ENCODE measurements at regions of chr7 and their contacts with region 1.

Region 1: DNA sequence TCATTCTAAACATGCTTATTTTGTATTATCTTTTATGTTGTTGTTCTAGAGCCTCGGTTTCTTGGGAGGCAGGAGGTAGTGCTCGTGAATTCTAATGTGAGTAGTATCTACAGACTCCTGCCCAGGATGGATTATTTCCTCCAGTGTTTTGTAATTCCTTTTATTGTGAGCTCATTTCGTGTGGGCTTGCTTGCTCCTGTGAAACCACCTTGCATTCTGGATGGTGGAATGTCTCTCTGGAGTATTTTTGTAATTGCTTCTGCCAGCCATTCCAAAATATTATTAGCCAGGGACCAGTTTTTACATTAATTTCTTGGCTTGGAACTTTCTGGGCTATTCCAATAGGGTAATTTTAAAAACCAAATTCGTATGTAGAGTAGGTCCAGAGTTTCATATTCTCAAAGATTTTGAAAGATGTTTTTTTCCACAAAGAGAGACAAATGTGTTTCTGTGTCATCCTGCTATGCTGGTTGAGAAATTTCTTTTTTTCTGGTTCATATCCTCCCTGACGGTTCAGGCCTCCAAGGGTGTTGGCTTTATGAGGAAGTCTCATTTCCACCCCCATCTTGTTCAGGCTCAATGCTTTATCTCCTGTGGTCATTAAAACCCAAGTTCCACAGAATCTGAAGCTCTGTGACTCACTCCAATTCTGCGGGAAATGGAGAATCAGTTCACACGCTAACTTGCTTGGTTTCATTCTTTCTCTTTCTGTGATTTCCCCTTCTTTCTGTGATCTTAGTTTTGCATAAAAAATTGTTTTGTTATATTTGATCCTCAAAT is 41.7 kb upstream of the CALD1 start:
- DNase-seq: peak; percentile 76
- H3K4me3 Mint-ChIP-seq: peak overlapping the region; percentile 26
- H3K27ac Mint-ChIP-seq: peak overlapping the region; percentile 83
- H3K4me1 Mint-ChIP-seq: peaks cover 28% of the 10 kb centered on the region
- H3K27me3 Mint-ChIP-seq: no peaks in the 10 kb centered on the region

Region 2: GRCh38 chr7:134613623-134614347 is 124.0 kb before region 1 on chr7:
- intact Hi-C with region 1: loop called (anchors 1 kb)
- DNase-seq: peak; percentile 64
- H3K4me3 Mint-ChIP-seq: no peak overlapping the region
- H3K27ac Mint-ChIP-seq: peak overlapping the region; percentile 85
- H3K4me1 Mint-ChIP-seq: peaks cover 12% of the 10 kb centered on the region
- H3K27me3 Mint-ChIP-seq: peaks cover 26% of the 10 kb centered on the region

Region 3: GRCh38 chr7:134710859-134711624 is 26.7 kb before region 1 on chr7:
- intact Hi-C with region 1: loop called (anchors 1 kb)
- DNase-seq: peak; percentile 85
- H3K4me3 Mint-ChIP-seq: peak overlapping the region; percentile 74
- H3K27ac Mint-ChIP-seq: peak overlapping the region; percentile 93
- H3K4me1 Mint-ChIP-seq: peaks cover 20% of the 10 kb centered on the region
- H3K27me3 Mint-ChIP-seq: peaks cover 2% of the 10 kb centered on the region

Region 4: GRCh38 chr7:134722786-134723322 is 14.9 kb before region 1 on chr7:
- intact Hi-C with region 1: no loop called
- DNase-seq: no peak
- H3K4me3 Mint-ChIP-seq: no peak overlapping the region
- H3K27ac Mint-ChIP-seq: no peak overlapping the region
- H3K4me1 Mint-ChIP-seq: peaks cover 2% of the 10 kb centered on the region
- H3K27me3 Mint-ChIP-seq: no peaks in the 10 kb centered on the region

Region 5: DNA sequence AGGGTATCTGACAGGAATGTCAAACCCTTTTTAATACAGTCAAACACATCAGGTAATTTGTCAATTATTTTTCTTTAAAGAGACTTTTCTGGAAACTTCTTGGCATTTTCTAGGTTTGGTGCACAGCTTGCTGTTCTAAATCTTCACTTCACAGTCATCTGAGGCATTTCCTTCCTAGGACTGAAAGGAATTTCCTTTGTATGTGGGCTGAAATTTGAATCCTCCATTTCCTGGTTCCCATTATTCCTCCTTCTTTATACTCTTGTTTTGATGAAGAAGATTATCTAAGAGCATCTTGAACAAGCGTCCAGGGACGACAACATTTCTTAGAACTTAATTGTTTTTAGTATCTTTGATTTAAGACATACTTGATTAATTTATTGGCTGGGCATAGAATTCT is 66.6 kb after region 1 on chr7:
- intact Hi-C with region 1: no loop called
- DNase-seq: no peak
- H3K4me3 Mint-ChIP-seq: no peak overlapping the region
- H3K27ac Mint-ChIP-seq: no peak overlapping the region
- H3K4me1 Mint-ChIP-seq: peaks cover 3% of the 10 kb centered on the region
- H3K27me3 Mint-ChIP-seq: no peaks in the 10 kb centered on the region

Region 6: DNA sequence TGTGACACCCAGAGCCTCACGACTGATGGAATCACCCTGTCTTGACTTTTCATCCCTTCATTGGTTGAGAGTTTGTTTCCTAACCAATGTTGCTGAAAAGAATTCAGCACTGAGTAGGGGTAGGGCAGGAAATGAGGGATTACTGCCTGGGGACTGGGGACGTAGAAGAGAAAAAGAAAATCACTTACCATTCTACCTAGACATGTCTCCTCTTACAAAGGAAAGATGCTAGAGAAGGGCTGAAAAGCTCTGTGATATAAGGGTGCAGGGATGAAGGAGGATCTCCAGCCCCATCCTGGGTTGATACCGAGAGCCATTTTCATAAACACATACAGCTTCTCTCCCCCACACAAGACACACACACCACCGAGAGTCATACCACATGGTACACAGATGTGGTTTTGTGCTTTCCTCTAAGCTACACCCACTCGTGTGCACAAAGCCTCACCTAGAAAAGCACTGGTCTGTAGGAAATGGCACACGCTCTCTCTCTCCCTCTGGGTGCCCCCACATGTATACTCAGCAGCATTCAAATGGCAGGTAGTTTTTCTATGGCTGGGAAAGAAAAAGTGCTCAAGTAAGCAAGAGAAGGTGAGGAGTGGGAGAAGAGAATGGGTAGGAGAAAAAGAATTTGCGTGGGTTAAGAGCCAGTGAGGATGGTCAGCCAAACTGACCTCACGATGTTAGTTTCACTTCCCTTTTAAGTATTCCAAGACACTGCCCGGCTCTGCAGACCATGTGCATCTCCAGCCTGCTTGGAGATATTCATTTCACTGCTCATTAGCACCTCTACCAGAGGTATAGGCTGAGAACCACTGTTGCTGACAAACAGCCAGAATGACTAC is 127.5 kb after region 1 on chr7:
- intact Hi-C with region 1: loop called (anchors 10 kb)
- DNase-seq: peak; percentile 81
- H3K4me3 Mint-ChIP-seq: peak overlapping the region; percentile 77
- H3K27ac Mint-ChIP-seq: peak overlapping the region; percentile 86
- H3K4me1 Mint-ChIP-seq: peaks cover 19% of the 10 kb centered on the region
- H3K27me3 Mint-ChIP-seq: no peaks in the 10 kb centered on the region

Region 7: DNA sequence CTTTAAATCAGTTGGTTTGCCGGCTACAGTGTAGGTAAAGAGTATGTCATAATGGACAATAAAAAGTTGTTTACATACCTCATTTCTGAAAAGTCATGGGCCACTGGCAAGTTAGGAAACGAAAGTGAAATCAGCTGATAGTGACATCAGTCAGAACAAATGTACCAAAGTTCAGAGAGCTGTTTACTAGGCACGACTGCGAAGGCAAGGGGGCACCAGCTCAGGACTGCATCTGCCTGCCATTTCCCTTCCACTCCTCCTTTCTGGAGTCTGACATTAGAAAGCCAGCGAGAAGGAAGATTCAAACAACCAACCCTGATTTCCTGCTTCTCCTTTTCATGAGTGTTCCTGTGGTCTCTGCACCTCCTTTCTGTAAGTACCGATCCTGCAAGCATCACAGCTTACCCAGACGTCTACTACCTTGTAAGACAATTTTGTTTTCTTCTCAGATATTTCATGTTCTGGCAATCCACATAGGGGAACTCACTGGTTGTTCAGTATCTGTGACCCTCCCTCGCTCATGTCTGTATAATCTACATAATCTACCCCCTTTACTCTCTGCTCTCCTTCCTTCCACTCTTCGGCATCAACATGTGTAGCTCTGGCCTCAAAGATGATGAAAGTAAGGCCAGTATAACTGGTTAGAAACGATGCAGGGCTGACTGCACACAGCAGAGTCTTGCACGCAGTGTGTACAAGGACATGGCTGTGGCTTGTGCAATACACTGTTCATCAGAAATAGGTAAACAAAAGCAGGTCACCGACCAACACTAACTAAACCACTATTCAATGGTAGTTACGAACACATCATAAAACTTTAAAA is 410.4 kb after region 1 on chr7 and contains the start of gene TMEM140:
- intact Hi-C with region 1: loop called (anchors 10 kb)
- DNase-seq: peak; percentile 92
- H3K4me3 Mint-ChIP-seq: peak within 1 kb of the TSS; percentile 91
- H3K27ac Mint-ChIP-seq: peak within 1 kb of the TSS; percentile 95
- H3K4me1 Mint-ChIP-seq: peaks cover 54% of the 10 kb centered on the region
- H3K27me3 Mint-ChIP-seq: no peaks in the 10 kb centered on the region
- total RNA-seq, gene TMEM140: 2.2 TPM in 2 replicates

Measured in activated CD4-positive, alpha-beta T cell treated with anti-CD3 and anti-CD28 coated beads, Interleukin-2, amount 10 ng/mL, durations not matched to agents 24 days and 14 days (primary cell).